Activated T-helper 1 cell treated with anti-CD3 and anti-CD28 coated beads, Interleukin-12 subunit alpha, Interleukin-12 subunit beta, Interleukin-2, Interleukin-4 antibody, amounts not matched to agents 30 ng/mL and 10 ng/mL and 1 ng/mL, durations not matched to agents 14 hours and 24 hours and 36 hours (primary cell): ENCODE measurements at regions of chr19 and their contacts with region 1.

Region 1: GRCh38 chr19:30428092-30428680 is 56.0 kb downstream of the ZNF536 start:
- DNase-seq: no peak
- H3K4me3 Mint-ChIP-seq: no peak overlapping the region
- H3K27ac Mint-ChIP-seq: no peak overlapping the region
- H3K4me1 Mint-ChIP-seq: no peaks in the 10 kb centered on the region
- H3K27me3 Mint-ChIP-seq: peaks cover 1% of the 10 kb centered on the region

Region 2: DNA sequence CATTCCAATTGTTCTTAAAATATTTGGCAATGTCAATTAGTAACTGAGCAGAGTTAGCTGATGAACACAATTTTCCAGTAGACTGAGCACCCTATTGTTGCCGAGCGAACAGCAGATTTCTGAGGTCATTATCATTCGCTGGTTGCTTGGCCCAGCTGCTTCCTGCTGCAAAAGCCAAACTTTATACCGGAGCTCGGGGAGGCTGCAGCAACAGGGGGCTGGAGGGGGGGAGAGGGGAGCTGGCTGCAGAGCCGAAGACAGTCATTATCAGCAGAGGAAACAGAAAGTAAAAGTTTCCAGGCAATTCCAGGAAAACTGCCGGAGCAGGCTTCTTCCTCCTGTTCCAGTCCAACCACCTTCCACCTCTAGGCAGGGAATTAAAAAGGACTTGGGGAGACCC is 21.9 kb after region 1 on chr19:
- intact Hi-C with region 1: no loop called
- DNase-seq: no peak
- H3K4me3 Mint-ChIP-seq: no peak overlapping the region
- H3K27ac Mint-ChIP-seq: no peak overlapping the region
- H3K4me1 Mint-ChIP-seq: no peaks in the 10 kb centered on the region
- H3K27me3 Mint-ChIP-seq: peaks cover 1% of the 10 kb centered on the region

Region 3: GRCh38 chr19:31054430-31054829 is 626.2 kb after region 1 on chr19:
- intact Hi-C with region 1: no loop called
- DNase-seq: peak; percentile 2
- H3K4me3 Mint-ChIP-seq: no peak overlapping the region
- H3K27ac Mint-ChIP-seq: no peak overlapping the region
- H3K4me1 Mint-ChIP-seq: no peaks in the 10 kb centered on the region
- H3K27me3 Mint-ChIP-seq: no peaks in the 10 kb centered on the region

Region 4: GRCh38 chr19:31906111-31906871 is 1478.1 kb after region 1 on chr19:
- intact Hi-C with region 1: loop called (anchors 5 kb)
- DNase-seq: no peak
- H3K4me3 Mint-ChIP-seq: no peak overlapping the region
- H3K27ac Mint-ChIP-seq: no peak overlapping the region
- H3K4me1 Mint-ChIP-seq: no peaks in the 10 kb centered on the region
- H3K27me3 Mint-ChIP-seq: no peaks in the 10 kb centered on the region